ENCODE measurements at regions of chr16 and their contacts with region 1.

Region 1: GRCh38 chr16:35651841-35652240 is 2192.4 kb downstream of the TP53TG3F start:
- DNase-seq: no peak
- ATAC-seq: no peak
- H3K4me3 ChIP-seq: no peak overlapping the region
- H3K27ac ChIP-seq: no peak overlapping the region
- H3K4me1 ChIP-seq: no peaks in the 10 kb centered on the region
- H3K27me3 ChIP-seq: no peaks in the 10 kb centered on the region
- CTCF ChIP-seq: no peak
- POLR2A ChIP-seq: no peak

Region 2: GRCh38 chr16:35713762-35714650 is 62.2 kb after region 1 on chr16:
- intact Hi-C with region 1: loop called in 1 of 10 experiments (anchors 10 kb)
- DNase-seq: peak in 3 of 5 donors; percentile 19 to 41 (median 30)
- ATAC-seq: peak; percentile 87 to 95 (median 92)
- H3K4me3 ChIP-seq: no peak overlapping the region
- H3K27ac ChIP-seq: peak overlapping the region in 7 of 12 donors; percentile 55 to 95 (median 66)
- H3K4me1 ChIP-seq: peaks cover 0 to 37% (median 4%) of the 10 kb centered on the region in 12 donors
- H3K27me3 ChIP-seq: no peaks in the 10 kb centered on the region
- CTCF ChIP-seq: no peak
- POLR2A ChIP-seq: no peak

Region 3: DNA sequence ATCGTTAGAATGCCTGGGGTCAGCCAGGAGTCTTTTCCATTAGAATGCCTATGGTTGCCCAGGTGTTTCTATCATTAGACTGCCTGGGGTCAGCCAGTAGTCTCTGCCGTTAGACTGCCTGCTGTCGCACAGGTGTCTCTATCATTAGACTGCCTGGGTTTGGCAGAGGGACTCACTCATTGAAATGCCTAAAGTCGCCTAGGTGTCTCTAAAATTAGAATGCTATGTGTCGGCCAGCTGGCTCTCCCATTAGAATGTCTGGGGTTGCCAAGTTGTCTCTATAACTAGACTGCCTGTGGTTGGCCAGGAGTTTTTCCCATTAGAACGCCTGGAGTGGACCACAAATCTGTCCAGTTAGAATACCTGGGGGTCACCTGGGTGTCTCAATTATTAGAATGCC is 74.1 kb after region 1 on chr16:
- intact Hi-C with region 1: no loop called
- DNase-seq: no peak
- ATAC-seq: peak; percentile 75 to 84 (median 78)
- H3K4me3 ChIP-seq: no peak overlapping the region
- H3K27ac ChIP-seq: no peak overlapping the region
- H3K4me1 ChIP-seq: peaks cover 0 to 18% (median 2%) of the 10 kb centered on the region in 12 donors
- H3K27me3 ChIP-seq: no peaks in the 10 kb centered on the region
- CTCF ChIP-seq: no peak
- POLR2A ChIP-seq: no peak